ENCODE measurements at regions of chr6 and their contacts with region 1.

Region 1: DNA sequence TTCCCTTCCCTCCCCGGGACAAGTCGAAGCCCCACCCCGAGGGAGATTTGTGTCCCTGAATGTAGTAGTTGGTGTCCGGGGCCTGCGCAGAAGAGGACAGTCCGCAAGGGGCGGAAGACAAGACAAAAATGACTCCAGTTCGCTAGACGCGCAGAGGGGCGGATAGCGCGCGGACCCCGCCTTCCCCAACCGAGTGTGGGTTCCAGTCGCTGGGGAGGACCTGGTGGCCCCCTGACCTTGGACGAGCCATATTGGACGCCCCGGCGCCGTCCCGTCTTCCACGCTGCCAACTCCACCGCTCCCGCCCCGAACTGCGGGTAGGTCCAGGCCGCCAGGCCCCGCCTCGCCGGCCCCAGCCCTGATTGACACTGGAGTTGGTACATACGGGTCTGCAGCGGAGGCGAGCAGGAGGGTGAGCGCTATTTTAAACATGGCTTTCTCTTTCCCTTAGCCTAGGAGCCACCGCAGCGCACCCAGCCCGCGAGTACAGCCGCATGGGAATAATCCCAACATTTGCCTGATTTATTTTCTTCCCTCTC is 802 bp downstream of the HMGN3 start:
- DNase-seq: no peak
- ATAC-seq: peak; percentile 94
- H3K4me3 ChIP-seq: peak overlapping the region; percentile 96 to 99
- H3K27ac ChIP-seq: peak overlapping the region; percentile 98
- H3K4me1 ChIP-seq: peaks cover 11% of the 10 kb centered on the region
- H3K27me3 ChIP-seq: no peaks in the 10 kb centered on the region
- CTCF ChIP-seq: no peak

Region 2: DNA sequence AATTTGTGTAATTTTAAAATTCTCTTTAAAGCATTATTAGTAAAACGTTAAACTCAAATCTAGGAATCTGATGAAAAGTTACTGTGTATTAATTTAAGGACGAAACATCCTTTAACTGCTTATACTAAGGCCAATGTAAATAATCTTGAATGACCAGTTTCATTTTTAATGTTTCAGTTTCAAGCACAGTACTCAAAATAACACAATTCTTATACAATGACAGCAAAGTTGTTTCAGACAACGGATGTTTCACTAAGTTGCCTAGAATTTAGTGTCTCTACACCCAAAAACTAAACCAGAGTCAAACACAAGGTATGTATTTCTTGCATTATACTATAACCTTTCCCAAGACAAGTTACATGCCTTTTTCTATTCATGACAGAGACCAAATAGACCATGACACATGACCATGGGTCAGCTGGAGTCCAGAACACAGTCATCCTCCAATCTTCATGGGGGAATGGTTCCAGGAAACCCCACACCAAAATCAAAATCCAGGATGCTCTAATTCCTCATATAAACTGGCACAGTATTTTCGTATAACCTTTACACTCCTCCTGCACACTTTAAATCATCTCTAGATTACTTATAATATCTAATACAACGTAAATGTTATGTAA is 163.4 kb before region 1 on chr6:
- CTCF ChIA-PET with region 1: no interaction called
- POLR2A ChIA-PET with region 1: no interaction called
- in situ Hi-C with region 1: loop called (anchors 25 kb)
- intact Hi-C with region 1: loop called (anchors 5 kb)
- DNase-seq: no peak
- ATAC-seq: no peak
- H3K4me3 ChIP-seq: no peak overlapping the region
- H3K27ac ChIP-seq: no peak overlapping the region
- H3K4me1 ChIP-seq: peaks cover 16% of the 10 kb centered on the region; the same call in 1 of the 2 replicates
- H3K27me3 ChIP-seq: no peaks in the 10 kb centered on the region
- CTCF ChIP-seq: no peak

Region 3: GRCh38 chr6:79078075-79079025 is 155.3 kb before region 1 on chr6 and contains the start of gene PHIP:
- CTCF ChIA-PET with region 1: no interaction called
- POLR2A ChIA-PET with region 1: no interaction called
- in situ Hi-C with region 1: loop called (anchors 25 kb)
- intact Hi-C with region 1: loop called (anchors 5 kb)
- DNase-seq: peak; percentile 73
- ATAC-seq: peak; percentile 92
- H3K4me3 ChIP-seq: peak within 1 kb of the TSS; percentile 84 to 87
- H3K27ac ChIP-seq: peak within 1 kb of the TSS; percentile 98
- H3K4me1 ChIP-seq: peaks cover 29% of the 10 kb centered on the region
- H3K27me3 ChIP-seq: no peaks in the 10 kb centered on the region
- CTCF ChIP-seq: no peak
- total RNA-seq, gene PHIP: 28.0 TPM